Mammary epithelial cell (primary cell): ENCODE measurements at regions of chr2 and their contacts with region 1.

Region 1: GRCh38 chr2:44560352-44560751 is 198.6 kb downstream of the CAMKMT start:
- DNase-seq: no peak
- H3K4me3 ChIP-seq: no peak overlapping the region
- H3K27ac ChIP-seq: no peak overlapping the region
- H3K4me1 ChIP-seq: peaks cover 2% of the 10 kb centered on the region
- H3K27me3 ChIP-seq: no peaks in the 10 kb centered on the region
- CTCF ChIP-seq: peak; percentile 33 to 64

Region 2: GRCh38 chr2:44510246-44510645 is 50.1 kb before region 1 on chr2:
- CTCF ChIA-PET with region 1: no interaction called
- dilution Hi-C with region 1: no loop called
- in situ Hi-C with region 1: no loop called
- intact Hi-C with region 1: no loop called
- DNase-seq: peak; percentile 38
- H3K4me3 ChIP-seq: no peak overlapping the region
- H3K27ac ChIP-seq: no peak overlapping the region
- H3K4me1 ChIP-seq: peaks cover 4% of the 10 kb centered on the region
- H3K27me3 ChIP-seq: no peaks in the 10 kb centered on the region
- CTCF ChIP-seq: no peak

Region 3: GRCh38 chr2:44715671-44716081 is 155.3 kb after region 1 on chr2:
- CTCF ChIA-PET with region 1: no interaction called
- dilution Hi-C with region 1: no loop called
- in situ Hi-C with region 1: no loop called
- intact Hi-C with region 1: loop called (anchors 1 kb)
- DNase-seq: peak; percentile 56
- H3K4me3 ChIP-seq: no peak overlapping the region
- H3K27ac ChIP-seq: no peak overlapping the region
- H3K4me1 ChIP-seq: no peaks in the 10 kb centered on the region
- H3K27me3 ChIP-seq: no peaks in the 10 kb centered on the region
- CTCF ChIP-seq: peak; percentile 50 to 82

Region 4: GRCh38 chr2:44974064-44974715 is 413.8 kb after region 1 on chr2:
- CTCF ChIA-PET with region 1: interaction called, 15 read pairs
- dilution Hi-C with region 1: no loop called
- in situ Hi-C with region 1: no loop called
- intact Hi-C with region 1: loop called (anchors 5 kb)
- DNase-seq: peak; percentile 53
- H3K4me3 ChIP-seq: no peak overlapping the region
- H3K27ac ChIP-seq: no peak overlapping the region
- H3K4me1 ChIP-seq: peaks cover 5% of the 10 kb centered on the region
- H3K27me3 ChIP-seq: no peaks in the 10 kb centered on the region
- CTCF ChIP-seq: peak; percentile 54 to 78

Region 5: DNA sequence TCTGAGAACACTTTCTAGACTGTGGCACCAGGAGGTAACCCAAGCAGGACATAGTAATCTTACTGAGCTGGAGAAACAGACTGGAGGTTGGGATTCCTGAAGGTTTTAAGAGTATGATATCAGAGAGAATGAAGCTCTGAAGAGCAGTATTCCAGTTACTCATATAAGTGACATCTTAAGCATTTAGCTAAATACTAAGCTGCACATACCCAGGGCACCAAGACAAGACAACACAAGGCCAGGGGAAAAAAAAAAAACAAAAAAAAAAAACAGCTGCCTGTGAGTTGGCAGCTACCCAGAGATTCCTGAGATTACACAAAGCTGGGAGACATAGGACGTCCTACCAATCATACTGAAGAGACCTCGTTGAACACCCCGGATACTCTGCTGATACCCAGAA is 875.0 kb after region 1 on chr2:
- CTCF ChIA-PET with region 1: no interaction called
- dilution Hi-C with region 1: no loop called
- in situ Hi-C with region 1: no loop called
- intact Hi-C with region 1: no loop called
- DNase-seq: peak; percentile 48
- H3K4me3 ChIP-seq: no peak overlapping the region
- H3K27ac ChIP-seq: no peak overlapping the region
- H3K4me1 ChIP-seq: peaks cover 7% of the 10 kb centered on the region
- H3K27me3 ChIP-seq: no peaks in the 10 kb centered on the region
- CTCF ChIP-seq: no peak